Activated CD4-positive, alpha-beta memory T cell treated with anti-CD3 and anti-CD28 coated beads for 36 hours (primary cell): ENCODE measurements at regions of chr13 and their contacts with region 1.

Region 1: GRCh38 chr13:79541426-79542049 is 60.6 kb downstream of the NDFIP2 start:
- DNase-seq: no peak
- H3K4me3 Mint-ChIP-seq: no peak overlapping the region
- H3K27ac Mint-ChIP-seq: no peak overlapping the region
- H3K4me1 Mint-ChIP-seq: peaks cover 6% of the 10 kb centered on the region
- H3K27me3 Mint-ChIP-seq: no peaks in the 10 kb centered on the region

Region 2: DNA sequence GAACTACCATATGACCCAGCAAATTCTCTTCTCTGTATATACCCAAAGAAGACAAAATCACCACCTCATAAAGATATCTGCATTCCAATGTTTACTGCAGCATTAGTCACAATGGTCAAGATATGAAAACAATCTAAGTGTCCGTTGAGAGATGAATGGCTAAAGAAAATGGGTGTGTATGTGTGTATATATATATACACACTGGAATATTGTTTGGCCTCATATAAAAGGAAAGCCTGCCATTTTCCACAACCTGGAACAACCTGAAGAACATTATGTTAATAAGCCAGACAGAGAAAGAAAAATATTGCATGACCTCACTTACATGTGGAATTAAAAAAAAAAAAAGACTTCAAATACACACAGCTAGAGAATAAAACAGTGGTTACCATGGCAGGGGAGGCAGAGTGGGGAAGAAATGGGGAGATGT is 106.0 kb before region 1 on chr13:
- CTCF ChIA-PET with region 1: interaction called, 17 read pairs
- POLR2A ChIA-PET with region 1: no interaction called
- intact Hi-C with region 1: no loop called
- DNase-seq: no peak
- H3K4me3 Mint-ChIP-seq: no peak overlapping the region
- H3K27ac Mint-ChIP-seq: no peak overlapping the region
- H3K4me1 Mint-ChIP-seq: peaks cover 16% of the 10 kb centered on the region
- H3K27me3 Mint-ChIP-seq: no peaks in the 10 kb centered on the region

Region 3: GRCh38 chr13:79486433-79487188 is 54.9 kb before region 1 on chr13:
- CTCF ChIA-PET with region 1: interaction called, 12 read pairs
- POLR2A ChIA-PET with region 1: interaction called, 4 read pairs
- intact Hi-C with region 1: loop called (anchors 1 kb)
- DNase-seq: no peak
- H3K4me3 Mint-ChIP-seq: peak overlapping the region; percentile 21
- H3K27ac Mint-ChIP-seq: peak overlapping the region; percentile 87
- H3K4me1 Mint-ChIP-seq: peaks cover 79% of the 10 kb centered on the region
- H3K27me3 Mint-ChIP-seq: no peaks in the 10 kb centered on the region

Region 4: GRCh38 chr13:79560953-79561352 is 19.4 kb after region 1 on chr13:
- CTCF ChIA-PET with region 1: no interaction called
- POLR2A ChIA-PET with region 1: no interaction called
- intact Hi-C with region 1: no loop called
- DNase-seq: no peak
- H3K4me3 Mint-ChIP-seq: no peak overlapping the region
- H3K27ac Mint-ChIP-seq: no peak overlapping the region
- H3K4me1 Mint-ChIP-seq: no peaks in the 10 kb centered on the region
- H3K27me3 Mint-ChIP-seq: no peaks in the 10 kb centered on the region